Activated B cell treated with CpG ODN at 0.5 μM for 24 hours (primary cell): ENCODE measurements at regions of chr1 and their contacts with region 1.

Region 1: GRCh38 chr1:166479052-166479631 is 312.3 kb upstream of the FAM78B start:
- DNase-seq: peak; percentile 18
- ATAC-seq: no peak
- H3K4me3 Mint-ChIP-seq: no peak overlapping the region
- H3K27ac Mint-ChIP-seq: no peak overlapping the region
- H3K4me1 Mint-ChIP-seq: peaks cover 4% of the 10 kb centered on the region
- H3K27me3 Mint-ChIP-seq: no peaks in the 10 kb centered on the region
- CTCF ChIP-seq: peak; percentile 50

Region 2: DNA sequence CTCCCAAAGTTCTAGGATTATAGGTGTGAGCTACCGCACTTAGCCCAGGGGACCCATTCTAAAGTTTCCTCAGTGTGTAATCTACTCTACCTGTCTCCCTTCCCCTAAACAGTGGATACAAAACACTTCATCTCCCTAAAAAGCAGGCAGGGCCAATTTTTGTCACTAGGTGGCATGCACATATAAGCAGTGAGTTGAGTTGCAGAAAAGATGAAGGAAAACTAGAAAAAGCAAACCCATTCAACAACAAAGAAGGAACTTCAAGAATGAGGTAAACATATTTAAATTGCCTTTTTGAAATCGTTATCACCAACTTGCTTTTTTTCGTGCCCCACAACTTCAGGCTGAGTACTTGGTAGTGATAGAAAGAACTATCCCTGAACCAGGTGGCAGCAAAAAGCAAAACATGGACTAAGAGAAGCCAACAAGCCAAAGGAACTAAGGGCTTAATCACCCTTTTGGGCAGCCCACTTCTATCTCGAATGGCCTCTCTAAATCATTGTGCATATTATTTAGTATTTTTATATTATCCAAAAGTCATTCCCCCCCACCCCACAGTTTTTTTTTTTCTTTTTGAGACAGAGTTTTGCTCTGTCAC is 761.1 kb before region 1 on chr1:
- CTCF ChIA-PET with region 1: no interaction called
- POLR2A ChIA-PET with region 1: no interaction called
- intact Hi-C with region 1: loop called (anchors 2 kb)
- DNase-seq: no peak
- ATAC-seq: peak; percentile 31
- H3K4me3 Mint-ChIP-seq: no peak overlapping the region
- H3K27ac Mint-ChIP-seq: no peak overlapping the region
- H3K4me1 Mint-ChIP-seq: no peaks in the 10 kb centered on the region
- H3K27me3 Mint-ChIP-seq: no peaks in the 10 kb centered on the region
- CTCF ChIP-seq: no peak

Region 3: GRCh38 chr1:165924117-165924516 is 555.0 kb before region 1 on chr1:
- CTCF ChIA-PET with region 1: interaction called, 29 read pairs
- POLR2A ChIA-PET with region 1: no interaction called
- intact Hi-C with region 1: loop called (anchors 1 kb)
- DNase-seq: no peak
- ATAC-seq: no peak
- H3K4me3 Mint-ChIP-seq: no peak overlapping the region
- H3K27ac Mint-ChIP-seq: no peak overlapping the region
- H3K4me1 Mint-ChIP-seq: no peaks in the 10 kb centered on the region
- H3K27me3 Mint-ChIP-seq: peaks cover 13% of the 10 kb centered on the region
- CTCF ChIP-seq: no peak

Region 4: GRCh38 chr1:166166695-166167571 is 312.2 kb before region 1 on chr1 and contains the start of gene FAM78B:
- CTCF ChIA-PET with region 1: no interaction called
- POLR2A ChIA-PET with region 1: no interaction called
- intact Hi-C with region 1: loop called (anchors 5 kb)
- DNase-seq: peak; percentile 55
- ATAC-seq: peak; percentile 84
- H3K4me3 Mint-ChIP-seq: peak within 1 kb of the TSS; percentile 77
- H3K27ac Mint-ChIP-seq: no peak within 1 kb of the TSS
- H3K4me1 Mint-ChIP-seq: peaks cover 19% of the 10 kb centered on the region
- H3K27me3 Mint-ChIP-seq: peaks cover 25% of the 10 kb centered on the region
- CTCF ChIP-seq: no peak
- total RNA-seq, gene FAM78B: 0.64 and 1.00 TPM in 2 replicates

Region 5: GRCh38 chr1:166410083-166410385 is 69.1 kb before region 1 on chr1:
- CTCF ChIA-PET with region 1: no interaction called
- POLR2A ChIA-PET with region 1: no interaction called
- intact Hi-C with region 1: no loop called
- DNase-seq: no peak
- ATAC-seq: no peak
- H3K4me3 Mint-ChIP-seq: no peak overlapping the region
- H3K27ac Mint-ChIP-seq: no peak overlapping the region
- H3K4me1 Mint-ChIP-seq: no peaks in the 10 kb centered on the region
- H3K27me3 Mint-ChIP-seq: peaks cover 4% of the 10 kb centered on the region
- CTCF ChIP-seq: no peak

Region 6: GRCh38 chr1:166489670-166490436 is 10.7 kb after region 1 on chr1:
- CTCF ChIA-PET with region 1: interaction called, 46 read pairs
- POLR2A ChIA-PET with region 1: interaction called, 7 read pairs
- intact Hi-C with region 1: no loop called
- DNase-seq: peak; percentile 34
- ATAC-seq: peak; percentile 77
- H3K4me3 Mint-ChIP-seq: no peak overlapping the region
- H3K27ac Mint-ChIP-seq: no peak overlapping the region
- H3K4me1 Mint-ChIP-seq: peaks cover 6% of the 10 kb centered on the region
- H3K27me3 Mint-ChIP-seq: peaks cover 3% of the 10 kb centered on the region
- CTCF ChIP-seq: no peak